HepG2 (cell line): ENCODE measurements at regions of chr17 and their contacts with region 1.

Region 1: GRCh38 chr17:38476544-38476943 is 48.3 kb downstream of the ARHGAP23 start:
- DNase-seq: no peak
- ATAC-seq: no peak
- H3K4me3 ChIP-seq: no peak overlapping the region
- H3K27ac ChIP-seq: no peak overlapping the region
- H3K4me1 ChIP-seq: no peaks in the 10 kb centered on the region
- H3K27me3 ChIP-seq: peaks cover under 1 to 22% of the 10 kb centered on the region in 2 experiments; a peak in 4 of 5 replicates
- CTCF ChIP-seq: no peak
- EP300 ChIP-seq: no peak
- POLR2A ChIP-seq: no peak
- RAD21 ChIP-seq: no peak

Region 2: DNA sequence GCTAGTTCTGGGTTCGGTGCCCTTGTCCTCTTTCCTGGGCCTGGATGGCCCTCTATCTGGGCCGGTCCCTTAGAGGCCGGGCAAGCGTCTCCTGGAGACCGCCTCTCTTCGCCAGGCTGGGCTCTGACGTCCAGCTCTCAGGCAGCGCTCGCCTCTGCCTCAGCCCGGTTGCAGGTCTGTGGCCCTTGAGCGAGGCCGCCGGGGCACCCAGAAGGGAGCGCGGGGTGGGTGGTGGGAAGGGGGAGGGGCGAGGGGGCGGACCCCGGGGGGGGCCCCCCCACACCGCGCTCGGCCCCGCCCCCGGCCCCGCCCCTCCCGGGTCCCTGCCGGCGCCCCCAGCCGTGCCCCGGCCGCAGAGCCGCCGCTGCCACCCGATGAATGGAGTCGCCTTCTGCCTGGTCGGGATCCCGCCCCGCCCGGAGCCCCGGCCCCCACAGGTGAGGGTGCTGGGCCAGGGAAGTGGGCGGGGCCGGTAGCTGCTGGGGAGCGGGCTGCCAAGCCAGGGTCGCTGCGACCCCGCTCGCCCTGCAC is 48.4 kb before region 1 on chr17 and contains the start of gene ARHGAP23:
- CTCF ChIA-PET with region 1: no interaction called
- POLR2A ChIA-PET with region 1: no interaction called
- in situ Hi-C with region 1: loop called (anchors 5 kb)
- intact Hi-C with region 1: loop called (anchors 5 kb)
- DNase-seq: no peak
- ATAC-seq: peak; percentile 50
- H3K4me3 ChIP-seq: peak within 1 kb of the TSS; percentile 4 to 63 (median 11); a peak in 5 of 6 replicates
- H3K27ac ChIP-seq: no peak within 1 kb of the TSS
- H3K4me1 ChIP-seq: peaks cover 20% of the 10 kb centered on the region
- H3K27me3 ChIP-seq: peaks cover 10 to 74% of the 10 kb centered on the region in 2 experiments
- CTCF ChIP-seq: no peak
- EP300 ChIP-seq: no peak
- POLR2A ChIP-seq: no peak
- RAD21 ChIP-seq: no peak
- total RNA-seq, gene ARHGAP23: not detected in 2 replicates

Region 3: GRCh38 chr17:38454516-38454915 is 22.0 kb before region 1 on chr17:
- CTCF ChIA-PET with region 1: no interaction called
- POLR2A ChIA-PET with region 1: no interaction called
- in situ Hi-C with region 1: no loop called
- intact Hi-C with region 1: no loop called
- DNase-seq: no peak
- ATAC-seq: peak; percentile 7; the same call in 1 of the 3 replicates
- H3K4me3 ChIP-seq: no peak overlapping the region; a peak in 1 of 6 replicates
- H3K27ac ChIP-seq: no peak overlapping the region
- H3K4me1 ChIP-seq: peaks cover 25% of the 10 kb centered on the region
- H3K27me3 ChIP-seq: peaks cover 25 to 92% of the 10 kb centered on the region in 2 experiments; a peak in 4 of 5 replicates
- CTCF ChIP-seq: no peak
- EP300 ChIP-seq: no peak
- POLR2A ChIP-seq: no peak
- RAD21 ChIP-seq: no peak